Activated CD4-positive, alpha-beta memory T cell treated with anti-CD3 and anti-CD28 coated beads, Interleukin-2, amount 10 ng/mL, durations not matched to agents 7 days and 5 days (primary cell): ENCODE measurements at regions of chr12 and their contacts with region 1.

Region 1: DNA sequence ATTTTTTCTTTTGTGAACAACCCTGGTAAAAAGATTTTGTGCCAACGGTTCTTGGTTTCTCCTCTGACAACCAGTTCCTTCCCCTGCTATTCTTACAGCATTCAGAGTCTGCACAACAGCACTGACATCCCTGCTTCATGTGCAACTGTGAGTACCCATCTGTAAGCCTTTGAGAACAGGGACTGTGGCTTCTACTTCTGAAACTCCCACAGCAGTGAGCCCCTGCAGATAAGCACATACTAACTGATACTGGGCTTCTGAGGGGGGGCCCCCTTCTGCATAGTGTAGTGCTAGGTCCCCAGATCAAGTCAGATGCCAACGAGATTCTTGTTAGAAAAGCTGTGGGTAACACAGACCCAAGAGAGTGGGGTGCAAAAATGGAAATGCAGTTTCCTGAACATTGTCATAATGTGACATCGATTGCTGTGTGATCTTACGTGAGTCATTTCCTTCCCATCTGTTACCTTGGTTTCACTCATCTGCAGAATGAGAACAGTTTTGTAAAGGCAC is 11.1 kb upstream of the NINJ2 start:
- DNase-seq: peak; percentile 78
- H3K4me3 Mint-ChIP-seq: peak overlapping the region; percentile 63
- H3K27ac Mint-ChIP-seq: peak overlapping the region; percentile 99
- H3K4me1 Mint-ChIP-seq: peaks cover 71% of the 10 kb centered on the region
- H3K27me3 Mint-ChIP-seq: no peaks in the 10 kb centered on the region

Region 2: GRCh38 chr12:602700-603068 is 71.6 kb before region 1 on chr12:
- CTCF ChIA-PET with region 1: no interaction called
- POLR2A ChIA-PET with region 1: no interaction called
- DNase-seq: no peak
- H3K4me3 Mint-ChIP-seq: no peak overlapping the region
- H3K27ac Mint-ChIP-seq: no peak overlapping the region
- H3K4me1 Mint-ChIP-seq: peaks cover 16% of the 10 kb centered on the region
- H3K27me3 Mint-ChIP-seq: no peaks in the 10 kb centered on the region

Region 3: GRCh38 chr12:642633-643474 is 31.5 kb before region 1 on chr12:
- CTCF ChIA-PET with region 1: interaction called, 3 read pairs
- POLR2A ChIA-PET with region 1: interaction called, 23 read pairs
- DNase-seq: peak; percentile 87
- H3K4me3 Mint-ChIP-seq: peak overlapping the region; percentile 84
- H3K27ac Mint-ChIP-seq: peak overlapping the region; percentile 94
- H3K4me1 Mint-ChIP-seq: peaks cover 64% of the 10 kb centered on the region
- H3K27me3 Mint-ChIP-seq: no peaks in the 10 kb centered on the region

Region 4: GRCh38 chr12:662566-663292 is 11.6 kb before region 1 on chr12:
- CTCF ChIA-PET with region 1: interaction called, 6 read pairs
- POLR2A ChIA-PET with region 1: interaction called, 15 read pairs
- DNase-seq: no peak
- H3K4me3 Mint-ChIP-seq: peak overlapping the region; percentile 69
- H3K27ac Mint-ChIP-seq: peak overlapping the region; percentile 71
- H3K4me1 Mint-ChIP-seq: peaks cover 46% of the 10 kb centered on the region
- H3K27me3 Mint-ChIP-seq: no peaks in the 10 kb centered on the region

Region 5: DNA sequence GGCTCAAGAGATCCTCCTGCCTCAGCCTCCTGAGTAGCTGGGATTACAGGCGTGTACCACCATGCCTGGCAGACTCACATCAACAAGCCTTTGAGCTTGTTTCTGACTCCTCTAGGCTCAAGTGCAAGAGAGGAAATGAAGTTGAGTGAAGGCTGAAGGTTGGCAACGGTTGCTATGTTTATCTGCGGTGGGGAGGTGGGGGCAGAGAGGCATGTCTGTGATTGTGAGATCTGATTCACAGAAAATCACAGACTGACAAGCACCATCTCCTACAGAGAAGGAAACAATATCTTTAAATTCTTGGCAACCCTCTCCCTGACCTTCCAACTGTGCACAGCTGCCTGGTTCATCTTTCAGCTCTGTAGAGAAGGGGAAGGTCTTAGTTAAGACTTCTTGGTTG is 11.1 kb after region 1 on chr12:
- CTCF ChIA-PET with region 1: interaction called, 11 read pairs
- POLR2A ChIA-PET with region 1: interaction called, 13 read pairs
- DNase-seq: peak; percentile 90
- H3K4me3 Mint-ChIP-seq: peak overlapping the region; percentile 37
- H3K27ac Mint-ChIP-seq: peak overlapping the region; percentile 91
- H3K4me1 Mint-ChIP-seq: peaks cover 35% of the 10 kb centered on the region
- H3K27me3 Mint-ChIP-seq: no peaks in the 10 kb centered on the region

Region 6: DNA sequence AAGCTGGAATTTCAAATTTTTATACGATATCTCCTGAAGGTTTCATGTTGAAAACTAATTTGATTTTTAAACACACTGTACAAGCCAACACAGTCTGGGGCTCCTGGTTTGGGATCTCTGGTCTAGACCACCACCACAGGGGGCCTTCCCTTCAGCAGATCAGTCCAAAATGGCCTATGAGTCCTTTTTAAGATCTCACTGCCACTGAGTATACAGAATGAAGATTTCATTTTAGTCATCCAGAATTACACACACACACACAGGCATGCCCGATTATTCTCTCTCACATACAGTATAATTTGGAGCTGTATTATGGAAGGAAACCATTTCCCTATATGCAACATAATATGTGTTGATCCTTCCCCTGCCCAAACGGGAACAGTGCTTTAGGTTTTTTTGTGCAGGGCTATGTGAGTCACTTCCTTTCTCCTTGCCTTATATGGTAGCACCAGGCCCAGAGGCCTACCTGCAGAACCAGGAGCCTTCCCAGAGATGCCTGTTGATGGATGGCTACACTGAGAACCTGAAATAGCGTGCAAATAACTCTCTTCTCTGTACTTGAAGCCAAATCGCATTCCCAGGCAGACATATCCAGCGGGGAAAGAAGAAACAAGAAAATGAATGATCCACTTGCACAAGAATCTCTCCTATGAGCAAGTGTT is 50.0 kb after region 1 on chr12:
- CTCF ChIA-PET with region 1: interaction called, 3 read pairs
- POLR2A ChIA-PET with region 1: interaction called, 12 read pairs
- DNase-seq: peak; percentile 30
- H3K4me3 Mint-ChIP-seq: peak overlapping the region; percentile 33
- H3K27ac Mint-ChIP-seq: peak overlapping the region; percentile 58
- H3K4me1 Mint-ChIP-seq: peaks cover 62% of the 10 kb centered on the region
- H3K27me3 Mint-ChIP-seq: no peaks in the 10 kb centered on the region

Region 7: DNA sequence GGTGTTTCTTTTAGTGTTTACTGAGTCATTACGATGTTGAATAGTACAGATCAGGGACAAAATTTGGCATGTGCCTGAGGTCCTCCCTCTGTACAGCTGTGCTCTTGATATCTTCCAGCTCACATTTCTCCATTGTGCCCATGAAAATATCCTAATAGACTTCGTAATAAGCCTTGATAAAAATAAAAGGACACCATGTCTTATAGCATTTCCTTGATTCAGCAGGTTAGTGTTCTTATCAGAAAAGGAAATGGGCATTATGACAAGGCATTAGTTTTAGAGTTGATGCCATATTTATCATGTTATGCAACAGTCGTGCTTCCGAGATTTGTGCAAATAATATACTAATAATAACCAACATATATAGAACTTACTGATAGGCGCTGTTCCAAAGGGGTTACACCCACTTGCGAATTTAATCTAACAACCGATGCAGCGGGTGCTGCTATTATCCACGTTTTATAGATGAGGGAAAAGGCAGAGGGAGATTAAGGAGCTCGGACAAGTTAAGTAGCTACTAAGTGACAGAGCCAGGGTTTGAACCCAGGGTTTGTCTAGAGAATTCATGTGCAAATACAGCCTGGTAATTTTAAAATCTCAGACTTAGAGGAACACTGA is 62.9 kb after region 1 on chr12:
- CTCF ChIA-PET with region 1: no interaction called
- POLR2A ChIA-PET with region 1: interaction called, 11 read pairs
- DNase-seq: no peak
- H3K4me3 Mint-ChIP-seq: no peak overlapping the region
- H3K27ac Mint-ChIP-seq: no peak overlapping the region
- H3K4me1 Mint-ChIP-seq: peaks cover 8% of the 10 kb centered on the region
- H3K27me3 Mint-ChIP-seq: no peaks in the 10 kb centered on the region

Region 8: DNA sequence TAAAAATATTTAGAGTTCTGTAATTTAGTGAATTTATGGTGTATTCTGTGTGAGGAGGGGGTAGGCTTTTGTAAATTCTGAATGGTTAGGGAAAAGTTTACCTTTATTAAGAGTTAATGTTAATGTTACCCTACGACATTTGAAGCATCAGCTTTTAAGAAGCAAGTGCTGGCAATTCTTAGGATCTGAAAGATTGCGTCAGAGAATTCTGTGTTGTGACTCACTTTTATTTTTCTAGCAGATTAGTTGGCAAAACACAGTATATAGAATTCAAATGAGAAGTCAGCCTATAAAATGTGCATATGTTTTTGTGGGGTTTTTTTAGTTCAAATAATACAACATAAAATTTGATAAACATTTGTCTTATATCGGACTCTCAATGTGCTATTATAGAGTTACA is 177.6 kb after region 1 on chr12:
- CTCF ChIA-PET with region 1: no interaction called
- POLR2A ChIA-PET with region 1: no interaction called
- DNase-seq: no peak
- H3K4me3 Mint-ChIP-seq: no peak overlapping the region
- H3K27ac Mint-ChIP-seq: no peak overlapping the region
- H3K4me1 Mint-ChIP-seq: peaks cover 21% of the 10 kb centered on the region
- H3K27me3 Mint-ChIP-seq: no peaks in the 10 kb centered on the region